Activated CD4-positive, alpha-beta T cell treated with anti-CD3 and anti-CD28 coated beads, Interleukin-2, amount 10 ng/mL, durations not matched to agents 24 days and 14 days (primary cell): ENCODE measurements at regions of chr7 and their contacts with region 1.

Region 1: GRCh38 chr7:76291343-76292212 is 10.9 kb upstream of the HSPB1 start:
- DNase-seq: peak; percentile 97
- H3K4me3 Mint-ChIP-seq: peak overlapping the region; percentile 33
- H3K27ac Mint-ChIP-seq: peak overlapping the region; percentile 77
- H3K4me1 Mint-ChIP-seq: peaks cover 16% of the 10 kb centered on the region
- H3K27me3 Mint-ChIP-seq: no peaks in the 10 kb centered on the region

Region 2: DNA sequence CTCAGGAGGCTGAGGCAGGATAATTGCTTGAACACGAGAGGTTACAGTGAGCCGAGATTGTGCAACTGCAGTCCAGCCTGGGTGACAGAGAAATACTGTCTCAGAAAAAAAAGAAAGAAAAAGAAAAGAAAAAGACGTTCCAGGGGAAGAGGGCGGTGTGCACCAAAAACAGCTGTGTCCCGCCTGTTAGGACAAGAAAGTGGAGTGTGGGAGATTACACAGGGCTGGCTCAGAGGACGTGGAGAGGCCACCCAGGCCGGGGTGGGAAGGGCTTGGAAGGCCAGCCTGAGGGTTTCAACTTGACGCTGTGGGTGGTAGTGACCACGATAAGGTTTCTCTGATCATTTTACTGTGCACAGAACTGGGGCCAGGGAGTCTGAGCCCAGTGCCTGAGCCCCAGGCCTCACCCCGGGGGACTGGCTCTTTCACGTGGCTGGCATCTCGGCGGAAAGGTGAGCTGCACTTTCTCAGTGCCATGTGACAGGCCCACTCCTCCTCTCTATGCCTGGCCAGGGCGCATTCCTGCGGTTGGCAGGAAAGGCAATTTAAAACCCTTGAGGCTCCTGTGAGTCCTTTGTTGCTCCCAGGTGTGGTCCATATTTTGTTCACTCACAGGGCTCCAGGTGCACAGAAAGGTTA is 398.8 kb before region 1 on chr7:
- intact Hi-C with region 1: no loop called
- DNase-seq: no peak
- H3K4me3 Mint-ChIP-seq: no peak overlapping the region
- H3K27ac Mint-ChIP-seq: peak overlapping the region; percentile 49
- H3K4me1 Mint-ChIP-seq: peaks cover 4% of the 10 kb centered on the region
- H3K27me3 Mint-ChIP-seq: no peaks in the 10 kb centered on the region

Region 3: GRCh38 chr7:76272851-76273497 is 18.6 kb before region 1 on chr7:
- intact Hi-C with region 1: loop called (anchors 2 kb)
- DNase-seq: no peak
- H3K4me3 Mint-ChIP-seq: peak overlapping the region; percentile 76
- H3K27ac Mint-ChIP-seq: peak overlapping the region; percentile 68
- H3K4me1 Mint-ChIP-seq: peaks cover 24% of the 10 kb centered on the region
- H3K27me3 Mint-ChIP-seq: peaks cover 22% of the 10 kb centered on the region

Region 4: DNA sequence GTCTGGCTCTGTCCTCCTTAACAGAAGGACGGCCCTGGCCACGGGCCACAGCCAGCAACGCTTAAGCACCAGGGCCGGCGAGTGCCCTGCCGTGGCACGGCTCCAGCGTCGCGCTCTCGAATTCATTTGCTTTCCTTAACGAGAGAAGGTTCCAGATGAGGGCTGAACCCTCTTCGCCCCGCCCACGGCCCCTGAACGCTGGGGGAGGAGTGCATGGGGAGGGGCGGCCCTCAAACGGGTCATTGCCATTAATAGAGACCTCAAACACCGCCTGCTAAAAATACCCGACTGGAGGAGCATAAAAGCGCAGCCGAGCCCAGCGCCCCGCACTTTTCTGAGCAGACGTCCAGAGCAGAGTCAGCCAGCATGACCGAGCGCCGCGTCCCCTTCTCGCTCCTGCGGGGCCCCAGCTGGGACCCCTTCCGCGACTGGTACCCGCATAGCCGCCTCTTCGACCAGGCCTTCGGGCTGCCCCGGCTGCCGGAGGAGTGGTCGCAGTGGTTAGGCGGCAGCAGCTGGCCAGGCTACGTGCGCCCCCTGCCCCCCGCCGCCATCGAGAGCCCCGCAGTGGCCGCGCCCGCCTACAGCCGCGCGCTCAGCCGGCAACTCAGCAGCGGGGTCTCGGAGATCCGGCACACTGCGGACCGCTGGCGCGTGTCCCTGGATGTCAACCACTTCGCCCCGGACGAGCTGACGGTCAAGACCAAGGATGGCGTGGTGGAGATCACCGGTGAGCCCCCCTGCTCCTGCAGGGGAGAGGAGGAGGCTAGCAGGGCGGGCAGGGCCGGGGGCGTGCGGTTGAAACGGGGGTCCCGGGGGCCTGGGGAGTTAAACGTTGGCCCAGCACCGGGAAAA is 11.0 kb after region 1 on chr7 and contains the start of gene HSPB1:
- intact Hi-C with region 1: loop called (anchors 1 kb)
- DNase-seq: peak; percentile 86
- H3K4me3 Mint-ChIP-seq: peak within 1 kb of the TSS; percentile 93
- H3K27ac Mint-ChIP-seq: peak within 1 kb of the TSS; percentile 92
- H3K4me1 Mint-ChIP-seq: peaks cover 16% of the 10 kb centered on the region
- H3K27me3 Mint-ChIP-seq: peaks cover 9% of the 10 kb centered on the region
- total RNA-seq, gene HSPB1: 112 and 117 TPM in 2 replicates